B cell (primary cell): ENCODE measurements at regions of chr10 and their contacts with region 1.

Region 1: DNA sequence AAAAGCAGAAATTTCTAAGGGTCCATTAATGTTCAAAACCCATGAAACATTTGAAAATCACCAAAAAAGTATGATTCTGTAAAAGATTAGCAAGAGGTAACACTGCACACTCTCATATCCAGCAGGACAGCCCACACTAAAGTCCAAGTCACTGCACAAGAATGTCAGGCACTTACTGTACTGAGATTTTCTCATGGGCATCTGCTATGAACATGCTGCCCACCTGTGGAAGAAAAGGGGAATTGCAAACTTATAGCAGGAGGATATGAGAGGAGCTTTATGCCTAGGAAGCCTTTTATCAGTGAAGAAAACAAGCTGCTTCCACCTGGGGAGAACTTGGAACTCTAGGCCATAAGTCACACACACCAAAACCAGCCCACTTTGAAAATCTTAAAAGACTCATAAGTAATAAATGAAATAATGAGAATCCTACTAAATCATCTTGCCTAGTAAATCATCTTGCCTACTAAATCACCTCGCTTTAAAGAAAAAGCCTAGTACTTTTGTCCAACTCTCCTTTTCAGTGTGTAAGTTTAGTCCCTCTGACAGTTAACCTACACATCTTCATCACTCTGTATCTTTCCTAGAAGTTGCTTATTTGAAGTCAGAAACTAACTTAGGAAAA is 46.1 kb downstream of the ARMH3 start:
- DNase-seq: peak; percentile 83
- ATAC-seq: peak; percentile 92
- H3K4me3 ChIP-seq: no peak overlapping the region
- H3K4me3 Mint-ChIP-seq: no peak overlapping the region
- H3K27ac ChIP-seq: peak overlapping the region in 1 of 2 donors; percentile 44
- H3K27ac Mint-ChIP-seq: peak overlapping the region; percentile 8
- H3K4me1 ChIP-seq: peaks cover 54 to 57% of the 10 kb centered on the region in 2 donors
- H3K4me1 Mint-ChIP-seq: peaks cover 46% of the 10 kb centered on the region
- H3K27me3 ChIP-seq: no peaks in the 10 kb centered on the region
- H3K27me3 Mint-ChIP-seq: no peaks in the 10 kb centered on the region
- CTCF ChIP-seq: peak; percentile 94

Region 2: GRCh38 chr10:101782811-101783735 is 226.8 kb before region 1 on chr10 and contains the start of gene NPM3:
- CTCF ChIA-PET with region 1: interaction called, 7 read pairs
- POLR2A ChIA-PET with region 1: interaction called, 7 read pairs
- intact Hi-C with region 1: loop called (anchors 1 kb)
- DNase-seq: peak; percentile 78
- ATAC-seq: peak; percentile 66
- H3K4me3 ChIP-seq: peak within 1 kb of the TSS; percentile 18 to 73 (median 67)
- H3K4me3 Mint-ChIP-seq: peak within 1 kb of the TSS; percentile 99
- H3K27ac ChIP-seq: peak within 1 kb of the TSS; percentile 8 to 69
- H3K27ac Mint-ChIP-seq: peak within 1 kb of the TSS; percentile 90
- H3K4me1 ChIP-seq: peaks cover 32 to 57% of the 10 kb centered on the region in 2 donors
- H3K4me1 Mint-ChIP-seq: peaks cover 55% of the 10 kb centered on the region
- H3K27me3 ChIP-seq: peaks cover 0 to 16% (median 7%) of the 10 kb centered on the region in 4 experiments
- H3K27me3 Mint-ChIP-seq: peaks cover 6% of the 10 kb centered on the region
- CTCF ChIP-seq: no peak
- total RNA-seq, gene NPM3: 13.4 and 13.5 TPM in 2 replicates

Region 3: DNA sequence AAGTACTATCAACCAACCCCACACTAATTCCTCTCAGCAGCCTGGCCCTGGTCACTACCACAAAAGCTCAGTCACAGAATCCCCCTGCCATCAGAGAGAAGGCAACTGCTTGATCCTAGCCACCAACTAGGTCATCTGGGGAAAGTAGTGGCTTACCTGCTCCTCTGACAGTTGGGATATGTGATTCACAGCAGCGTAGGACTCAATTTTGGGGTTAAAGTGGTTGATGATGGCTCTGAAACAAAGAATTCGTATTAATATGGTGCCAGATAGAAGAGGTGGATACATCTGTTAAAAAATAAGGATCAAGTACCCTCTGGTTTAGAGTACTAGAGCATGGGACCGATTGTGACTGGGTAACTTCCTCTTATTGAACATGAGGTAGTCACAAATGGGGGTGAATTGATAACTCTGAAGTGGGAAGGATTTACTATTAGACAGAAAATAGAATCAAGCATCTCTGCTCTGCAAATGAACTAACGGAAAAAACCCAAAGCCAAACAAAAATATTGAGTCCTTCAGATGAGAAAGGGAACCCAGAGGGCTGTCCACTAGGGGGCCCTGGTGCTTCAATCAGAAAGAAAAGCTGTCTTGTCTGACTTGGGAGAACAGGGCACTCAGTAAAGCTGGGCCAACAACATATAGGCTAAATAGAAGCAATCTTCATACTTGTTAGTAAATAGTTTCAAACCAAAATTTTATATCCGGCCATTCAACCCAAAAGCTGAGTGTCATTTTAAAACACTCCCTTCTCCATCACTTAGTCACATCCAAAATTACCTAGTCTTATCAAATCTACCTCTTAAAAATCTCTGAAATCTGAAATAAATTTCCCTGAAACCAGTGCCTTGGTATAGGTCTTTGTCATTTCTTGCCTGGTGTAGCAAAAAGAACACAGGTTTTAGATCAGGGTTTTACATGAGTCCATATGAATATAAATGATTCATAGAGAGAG is 120.4 kb before region 1 on chr10:
- CTCF ChIA-PET with region 1: interaction called, 986 read pairs
- POLR2A ChIA-PET with region 1: interaction called, 12 read pairs
- intact Hi-C with region 1: loop called (anchors 1 kb)
- DNase-seq: peak; percentile 83
- ATAC-seq: peak; percentile 79
- H3K4me3 ChIP-seq: peak overlapping the region in 1 of 5 experiments; percentile 18
- H3K4me3 Mint-ChIP-seq: peak overlapping the region; percentile 1
- H3K27ac ChIP-seq: peak overlapping the region; percentile 17 to 75
- H3K27ac Mint-ChIP-seq: peak overlapping the region; percentile 59
- H3K4me1 ChIP-seq: peaks cover 23 to 43% of the 10 kb centered on the region in 2 donors
- H3K4me1 Mint-ChIP-seq: peaks cover 48% of the 10 kb centered on the region
- H3K27me3 ChIP-seq: no peaks in the 10 kb centered on the region
- H3K27me3 Mint-ChIP-seq: no peaks in the 10 kb centered on the region
- CTCF ChIP-seq: peak; percentile 90

Region 4: GRCh38 chr10:101959349-101959916 is 50.5 kb before region 1 on chr10:
- CTCF ChIA-PET with region 1: interaction called, 26 read pairs
- POLR2A ChIA-PET with region 1: no interaction called
- intact Hi-C with region 1: no loop called
- DNase-seq: no peak
- ATAC-seq: no peak
- H3K4me3 ChIP-seq: no peak overlapping the region
- H3K4me3 Mint-ChIP-seq: no peak overlapping the region
- H3K27ac ChIP-seq: peak overlapping the region in 1 of 2 donors; percentile 73
- H3K27ac Mint-ChIP-seq: peak overlapping the region; percentile 57
- H3K4me1 ChIP-seq: peaks cover 14 to 29% of the 10 kb centered on the region in 2 donors
- H3K4me1 Mint-ChIP-seq: peaks cover 46% of the 10 kb centered on the region
- H3K27me3 ChIP-seq: no peaks in the 10 kb centered on the region
- H3K27me3 Mint-ChIP-seq: no peaks in the 10 kb centered on the region
- CTCF ChIP-seq: no peak

Region 5: GRCh38 chr10:101995451-101996063 is 14.4 kb before region 1 on chr10:
- CTCF ChIA-PET with region 1: interaction called, 53 read pairs
- POLR2A ChIA-PET with region 1: no interaction called
- intact Hi-C with region 1: no loop called
- DNase-seq: no peak
- ATAC-seq: no peak
- H3K4me3 ChIP-seq: no peak overlapping the region
- H3K4me3 Mint-ChIP-seq: no peak overlapping the region
- H3K27ac ChIP-seq: peak overlapping the region in 1 of 2 donors; percentile 51
- H3K27ac Mint-ChIP-seq: peak overlapping the region; percentile 59
- H3K4me1 ChIP-seq: peaks cover 47 to 49% of the 10 kb centered on the region in 2 donors
- H3K4me1 Mint-ChIP-seq: peaks cover 45% of the 10 kb centered on the region
- H3K27me3 ChIP-seq: no peaks in the 10 kb centered on the region
- H3K27me3 Mint-ChIP-seq: no peaks in the 10 kb centered on the region
- CTCF ChIP-seq: no peak

Region 6: DNA sequence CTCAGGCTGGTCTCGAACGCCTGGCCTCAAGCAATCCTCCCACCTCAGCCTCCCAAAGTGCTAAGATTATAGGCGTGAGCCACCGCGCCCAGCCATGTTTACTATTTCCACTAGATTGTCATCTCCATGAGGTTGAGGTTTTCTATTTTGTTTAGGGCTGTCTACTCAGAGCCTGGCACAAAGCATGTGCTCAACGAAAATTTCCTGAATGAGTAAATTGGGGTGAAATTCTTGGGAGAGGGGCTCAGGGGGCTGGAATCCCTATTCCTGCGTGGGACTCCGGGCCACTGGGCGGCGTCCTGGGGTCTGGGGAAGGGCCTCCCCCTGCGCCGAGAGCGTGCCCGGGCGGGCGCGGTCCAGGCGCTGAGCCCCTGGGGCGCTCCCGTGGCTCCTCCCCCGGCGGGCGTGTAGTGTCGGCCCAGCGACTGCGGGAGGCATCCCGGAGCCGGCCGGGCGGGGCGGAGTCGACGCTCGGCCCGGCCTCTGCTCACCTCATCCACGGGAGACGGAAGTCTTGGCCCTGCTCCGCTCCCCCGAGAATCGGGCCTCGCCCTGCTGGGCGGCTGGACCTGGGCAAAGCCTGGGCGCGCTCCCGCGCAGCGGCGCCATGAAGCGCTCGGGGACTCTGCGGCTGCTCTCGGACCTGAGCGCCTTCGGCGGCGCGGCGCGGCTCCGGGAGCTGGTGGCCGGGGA is 55.1 kb after region 1 on chr10 and contains the start of gene HPS6:
- CTCF ChIA-PET with region 1: interaction called, 11 read pairs
- POLR2A ChIA-PET with region 1: no interaction called
- intact Hi-C with region 1: no loop called
- DNase-seq: peak; percentile 90
- ATAC-seq: peak; percentile 98
- H3K4me3 ChIP-seq: peak within 1 kb of the TSS; percentile 51 to 89 (median 73)
- H3K4me3 Mint-ChIP-seq: peak within 1 kb of the TSS; percentile 92
- H3K27ac ChIP-seq: peak within 1 kb of the TSS; percentile 63 to 90
- H3K27ac Mint-ChIP-seq: peak within 1 kb of the TSS; percentile 92
- H3K4me1 ChIP-seq: peaks cover 15 to 20% of the 10 kb centered on the region in 2 donors
- H3K4me1 Mint-ChIP-seq: peaks cover 23% of the 10 kb centered on the region
- H3K27me3 ChIP-seq: no peaks in the 10 kb centered on the region
- H3K27me3 Mint-ChIP-seq: no peaks in the 10 kb centered on the region
- CTCF ChIP-seq: no peak
- total RNA-seq, gene HPS6: 28.6 and 29.5 TPM in 2 replicates